Activated T-helper 2 cell treated with anti-CD3 and anti-CD28 coated beads, Interferon-gamma antibody, Interleukin-2, Interleukin-4, amounts not matched to agents 10 μg/mL and 5 μg/mL and 100 μg/mL, durations not matched to agents 14 hours and 24 hours and 36 hours (primary cell): ENCODE measurements at regions of chrX and their contacts with region 1.

Region 1: DNA sequence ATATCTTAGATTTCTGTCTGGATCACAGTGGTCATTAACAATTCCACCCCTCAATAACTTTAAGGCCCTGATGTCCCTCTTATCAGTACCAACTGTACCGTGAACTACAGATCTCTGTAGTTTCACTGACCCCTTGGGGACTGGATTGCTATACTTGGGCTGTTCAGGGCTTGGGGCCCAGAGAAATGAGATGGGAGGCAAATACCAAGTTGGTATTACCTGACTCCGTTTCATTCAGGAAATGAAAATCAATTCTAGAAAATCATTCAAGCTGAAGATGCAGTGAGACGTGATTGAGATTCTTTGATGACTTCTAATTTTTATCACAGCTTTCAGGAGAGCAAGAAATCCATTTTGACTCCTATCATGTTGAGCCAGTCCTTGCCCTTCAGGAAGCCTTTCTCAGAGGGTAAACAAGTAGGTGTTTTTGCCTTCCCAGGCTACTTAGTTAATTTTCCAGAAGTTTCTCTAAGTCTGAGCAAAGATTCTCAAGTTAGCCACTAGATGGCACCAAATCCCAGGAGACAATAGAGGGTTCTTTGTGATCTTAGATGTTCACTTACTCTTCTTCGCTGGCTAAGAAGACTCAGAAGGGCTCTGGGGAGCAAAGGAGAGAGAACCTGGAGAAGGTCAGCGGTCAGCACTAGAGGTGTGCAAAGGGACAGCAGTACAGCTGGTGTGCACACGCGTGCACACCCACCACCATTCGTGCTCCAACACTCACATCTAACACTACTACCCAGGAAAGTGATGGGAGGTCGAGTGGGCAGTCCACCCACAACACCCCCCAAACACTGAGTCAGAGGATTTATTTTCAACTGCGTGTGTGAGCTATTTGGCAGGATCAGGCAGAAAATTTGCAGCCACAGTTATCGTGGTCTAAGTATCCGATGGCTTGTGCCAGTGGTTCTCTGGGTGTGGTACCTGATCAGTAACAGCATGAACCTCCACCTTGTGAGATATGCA is 7.4 kb downstream of the HNRNPH2 start:
- DNase-seq: peak; percentile 10
- H3K4me3 Mint-ChIP-seq: peak overlapping the region; percentile 13
- H3K27ac Mint-ChIP-seq: peak overlapping the region; percentile 87
- H3K4me1 Mint-ChIP-seq: peaks cover 37% of the 10 kb centered on the region
- H3K27me3 Mint-ChIP-seq: no peaks in the 10 kb centered on the region

Region 2: GRCh38 chrX:101442085-101442484 is 26.6 kb after region 1 on chrX:
- intact Hi-C with region 1: no loop called
- DNase-seq: no peak
- H3K4me3 Mint-ChIP-seq: no peak overlapping the region
- H3K27ac Mint-ChIP-seq: no peak overlapping the region
- H3K4me1 Mint-ChIP-seq: peaks cover 2% of the 10 kb centered on the region
- H3K27me3 Mint-ChIP-seq: no peaks in the 10 kb centered on the region

Region 3: GRCh38 chrX:101485199-101485949 is 69.9 kb after region 1 on chrX and contains the start of gene ARMCX4:
- intact Hi-C with region 1: loop called (anchors 5 kb)
- DNase-seq: peak; percentile 14
- H3K4me3 Mint-ChIP-seq: peak within 1 kb of the TSS; percentile 79
- H3K27ac Mint-ChIP-seq: no peak within 1 kb of the TSS
- H3K4me1 Mint-ChIP-seq: peaks cover 7% of the 10 kb centered on the region
- H3K27me3 Mint-ChIP-seq: peaks cover 5% of the 10 kb centered on the region
- total RNA-seq, gene ARMCX4: 4.7 and 6.3 TPM in 2 replicates

Region 4: DNA sequence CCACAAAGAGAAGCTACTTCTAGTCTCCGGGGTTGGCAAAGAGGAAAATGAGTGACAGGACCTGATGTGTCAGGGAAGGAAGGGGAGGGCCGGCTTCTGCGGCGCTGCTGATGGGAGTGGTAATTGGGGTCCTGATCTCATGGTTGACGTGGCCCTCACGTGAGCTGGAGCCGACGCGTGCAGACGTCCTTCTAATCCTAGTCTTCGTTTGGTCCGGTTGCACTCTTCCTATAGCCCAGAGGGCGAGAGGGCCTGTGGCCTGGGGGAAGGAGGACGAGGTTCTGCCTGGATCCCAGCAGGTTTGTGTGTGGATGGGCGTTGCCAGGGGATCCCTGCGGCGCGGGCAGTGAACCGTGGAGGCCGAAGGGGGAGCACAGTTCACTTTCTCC is 134.9 kb after region 1 on chrX and contains the start of gene ARMCX1:
- intact Hi-C with region 1: loop called (anchors 5 kb)
- DNase-seq: no peak
- H3K4me3 Mint-ChIP-seq: peak within 1 kb of the TSS; percentile 52
- H3K27ac Mint-ChIP-seq: no peak within 1 kb of the TSS
- H3K4me1 Mint-ChIP-seq: peaks cover 4% of the 10 kb centered on the region
- H3K27me3 Mint-ChIP-seq: peaks cover 14% of the 10 kb centered on the region
- total RNA-seq, gene ARMCX1: 0.82 and 1.1 TPM in 2 replicates

Region 5: GRCh38 chrX:101595739-101596419 is 180.4 kb after region 1 on chrX:
- intact Hi-C with region 1: loop called (anchors 5 kb)
- DNase-seq: no peak
- H3K4me3 Mint-ChIP-seq: no peak overlapping the region
- H3K27ac Mint-ChIP-seq: no peak overlapping the region
- H3K4me1 Mint-ChIP-seq: no peaks in the 10 kb centered on the region
- H3K27me3 Mint-ChIP-seq: peaks cover 8% of the 10 kb centered on the region

Region 6: DNA sequence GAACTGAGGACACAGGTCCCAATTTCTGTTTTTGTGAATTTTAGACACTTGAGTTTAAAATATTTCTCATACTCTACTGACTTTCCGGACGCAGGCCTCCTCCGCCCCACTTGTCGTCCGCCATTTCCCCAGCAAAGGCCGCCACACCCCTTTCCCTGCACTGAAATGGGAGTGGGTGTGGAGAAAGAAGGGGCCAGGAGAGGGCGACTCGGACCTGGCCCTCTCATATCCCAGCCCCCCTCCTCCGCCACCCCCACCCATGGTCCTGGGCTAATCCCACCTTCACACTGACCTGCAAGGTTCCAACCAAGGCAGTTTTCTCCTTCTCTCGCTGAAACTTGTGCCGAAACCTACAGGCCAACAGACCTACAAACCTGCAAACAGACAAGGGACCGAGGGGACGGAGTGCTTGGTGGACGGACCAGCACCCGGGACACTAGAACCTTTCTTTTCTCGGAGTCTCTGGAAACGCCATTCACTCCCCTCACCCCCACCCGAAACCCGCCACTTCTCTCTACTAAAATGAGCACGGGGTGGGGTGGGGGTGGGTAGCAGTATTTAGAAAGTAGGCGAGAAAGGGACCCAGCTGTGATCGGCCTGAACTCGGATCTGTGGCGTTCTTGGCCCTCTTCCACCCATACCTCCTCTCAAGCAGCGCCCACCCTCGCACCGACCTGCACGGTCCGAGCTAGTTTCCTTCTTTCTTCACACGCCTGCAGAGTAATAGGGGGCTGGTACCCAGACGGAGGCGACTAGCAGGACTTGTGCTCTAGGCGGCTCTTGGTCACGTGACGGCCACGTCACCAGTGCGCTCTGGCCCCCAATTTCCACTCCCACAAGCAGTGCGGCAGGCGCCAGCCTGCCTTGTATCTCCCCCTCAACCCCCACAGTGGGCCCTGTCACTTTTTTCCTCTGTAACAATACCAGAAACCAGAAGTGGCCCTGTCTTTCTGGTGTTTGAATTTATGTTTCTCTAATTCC is 202.0 kb after region 1 on chrX and contains the start of gene ARMCX6:
- intact Hi-C with region 1: loop called (anchors 5 kb)
- DNase-seq: peak; percentile 71
- H3K4me3 Mint-ChIP-seq: peak within 1 kb of the TSS; percentile 90
- H3K27ac Mint-ChIP-seq: peak within 1 kb of the TSS; percentile 90
- H3K4me1 Mint-ChIP-seq: peaks cover 43% of the 10 kb centered on the region
- H3K27me3 Mint-ChIP-seq: no peaks in the 10 kb centered on the region
- total RNA-seq, gene ARMCX6: 92.1 and 94.5 TPM in 2 replicates

Region 7: GRCh38 chrX:101759000-101759399 is 343.5 kb after region 1 on chrX:
- intact Hi-C with region 1: no loop called
- DNase-seq: peak; percentile 8
- H3K4me3 Mint-ChIP-seq: no peak overlapping the region
- H3K27ac Mint-ChIP-seq: no peak overlapping the region
- H3K4me1 Mint-ChIP-seq: peaks cover 4% of the 10 kb centered on the region
- H3K27me3 Mint-ChIP-seq: no peaks in the 10 kb centered on the region

Region 8: DNA sequence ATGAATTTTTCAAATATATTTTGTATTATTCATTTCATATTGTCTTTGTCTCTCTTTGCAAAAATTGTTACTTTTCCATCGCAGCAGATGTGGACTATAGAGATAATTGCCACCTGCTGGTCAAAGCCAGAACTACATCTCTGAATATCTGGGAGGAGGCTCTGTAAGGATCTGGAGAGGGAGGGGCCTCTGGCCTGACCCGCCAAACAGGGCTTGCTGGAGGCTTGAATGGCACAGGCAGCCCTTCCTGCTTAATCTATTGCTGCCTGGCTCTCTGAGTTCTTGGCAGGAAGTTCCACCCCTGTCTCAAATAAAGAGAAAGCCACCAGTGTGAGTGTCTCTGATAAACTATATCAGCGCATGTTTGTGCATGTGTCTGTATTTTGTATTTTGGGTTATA is 383.9 kb after region 1 on chrX:
- intact Hi-C with region 1: loop called (anchors 1 kb)
- DNase-seq: peak; percentile 71
- H3K4me3 Mint-ChIP-seq: peak overlapping the region; percentile 70
- H3K27ac Mint-ChIP-seq: peak overlapping the region; percentile 62
- H3K4me1 Mint-ChIP-seq: peaks cover 2% of the 10 kb centered on the region
- H3K27me3 Mint-ChIP-seq: no peaks in the 10 kb centered on the region

Region 9: DNA sequence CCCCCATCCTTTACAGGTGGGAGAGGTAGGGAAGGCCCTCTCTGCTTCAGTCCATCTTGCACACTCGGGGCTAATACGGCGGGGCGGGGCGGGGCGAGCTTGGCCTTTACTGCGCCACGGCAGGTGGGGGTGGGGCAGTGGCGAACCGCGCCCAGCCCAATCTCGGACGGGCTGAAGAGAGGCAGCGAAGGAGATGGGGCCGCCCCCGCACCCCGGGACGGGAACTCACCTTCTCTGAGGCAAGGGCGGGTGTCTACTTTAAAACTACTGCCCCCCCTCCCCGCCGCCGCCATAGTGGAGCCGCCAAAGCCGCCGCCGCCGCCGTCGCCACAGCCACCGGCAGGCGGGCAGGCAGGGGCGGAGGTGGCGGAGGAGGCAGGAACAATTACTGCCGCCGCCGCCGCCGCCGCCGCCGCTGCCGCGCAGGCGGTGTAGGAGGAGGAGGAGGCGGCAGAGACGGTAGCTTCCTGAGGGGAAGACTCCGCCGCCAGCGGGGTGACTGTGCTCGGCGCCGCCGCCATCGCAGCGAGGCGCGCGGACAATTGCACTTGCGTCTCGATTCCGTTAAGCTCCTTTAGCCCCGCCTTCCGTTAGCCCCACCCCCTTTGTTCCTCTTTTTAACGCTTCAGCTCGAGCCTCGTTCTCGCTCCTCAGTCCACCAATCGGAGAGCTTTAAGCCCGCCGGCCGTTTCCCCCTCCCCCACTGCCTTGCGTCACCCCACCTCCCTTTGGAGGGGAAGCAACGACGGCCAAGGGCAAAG is 516.2 kb after region 1 on chrX and contains the start of gene ZMAT1:
- intact Hi-C with region 1: loop called (anchors 5 kb)
- DNase-seq: peak; percentile 82
- H3K4me3 Mint-ChIP-seq: peak within 1 kb of the TSS; percentile 84
- H3K27ac Mint-ChIP-seq: peak within 1 kb of the TSS; percentile 89
- H3K4me1 Mint-ChIP-seq: peaks cover 9% of the 10 kb centered on the region
- H3K27me3 Mint-ChIP-seq: no peaks in the 10 kb centered on the region
- total RNA-seq, gene ZMAT1: 1.7 and 2.5 TPM in 2 replicates